ENCODE measurements at regions of chr12 and their contacts with region 1.

Region 1: GRCh38 chr12:53159195-53159839 is 21.2 kb upstream of the ZNF740 start:
- DNase-seq: peak; percentile 63
- H3K4me3 ChIP-seq: no peak overlapping the region
- H3K27ac ChIP-seq: no peak overlapping the region
- H3K4me1 ChIP-seq: no peaks in the 10 kb centered on the region
- H3K27me3 ChIP-seq: no peaks in the 10 kb centered on the region
- CTCF ChIP-seq: peak; percentile 99

Region 2: GRCh38 chr12:53190108-53190729 is 30.9 kb after region 1 on chr12:
- CTCF ChIA-PET with region 1: no interaction called
- dilution Hi-C with region 1: no loop called
- in situ Hi-C with region 1: no loop called
- intact Hi-C with region 1: loop called (anchors 1 kb)
- DNase-seq: peak; percentile 28
- H3K4me3 ChIP-seq: no peak overlapping the region
- H3K27ac ChIP-seq: no peak overlapping the region
- H3K4me1 ChIP-seq: peaks cover 5% of the 10 kb centered on the region
- H3K27me3 ChIP-seq: no peaks in the 10 kb centered on the region
- CTCF ChIP-seq: peak; percentile 89 to 93

Region 3: DNA sequence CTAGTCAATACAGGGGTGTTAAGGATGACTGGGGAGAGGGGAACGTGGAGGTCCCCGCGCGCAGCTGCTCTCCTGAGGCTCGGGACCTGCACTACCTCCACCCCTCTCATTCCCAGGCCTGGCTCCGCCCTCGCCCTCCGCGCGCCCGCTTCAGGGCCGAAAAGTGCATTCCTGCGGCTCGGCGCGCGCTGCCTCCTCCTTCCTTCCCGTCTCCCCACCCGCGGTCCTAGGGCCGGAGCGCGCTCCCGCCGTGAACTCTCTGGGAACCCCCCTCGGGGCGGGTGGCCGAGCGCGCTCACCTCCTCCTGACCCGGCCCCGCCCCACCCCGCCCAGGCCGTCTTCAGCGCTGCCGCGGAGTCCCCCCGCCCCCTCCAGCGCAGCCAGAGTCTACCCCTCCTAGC is 61.5 kb after region 1 on chr12:
- CTCF ChIA-PET with region 1: interaction called, 12 read pairs
- dilution Hi-C with region 1: no loop called
- in situ Hi-C with region 1: no loop called
- intact Hi-C with region 1: no loop called
- DNase-seq: peak; percentile 93
- H3K4me3 ChIP-seq: peak overlapping the region; percentile 48 to 60 (median 55)
- H3K27ac ChIP-seq: no peak overlapping the region
- H3K4me1 ChIP-seq: peaks cover 83% of the 10 kb centered on the region
- H3K27me3 ChIP-seq: no peaks in the 10 kb centered on the region
- CTCF ChIP-seq: no peak

Region 4: GRCh38 chr12:53267999-53268647 is 108.8 kb after region 1 on chr12 and contains the start of gene ESPL1:
- CTCF ChIA-PET with region 1: no interaction called
- dilution Hi-C with region 1: no loop called
- in situ Hi-C with region 1: no loop called
- intact Hi-C with region 1: loop called (anchors 1 kb)
- DNase-seq: peak; percentile 83
- H3K4me3 ChIP-seq: peak within 1 kb of the TSS; percentile 88 to 98 (median 96)
- H3K27ac ChIP-seq: peak within 1 kb of the TSS; percentile 91
- H3K4me1 ChIP-seq: peaks cover 18% of the 10 kb centered on the region
- H3K27me3 ChIP-seq: no peaks in the 10 kb centered on the region
- CTCF ChIP-seq: peak; percentile 13 to 15
- total RNA-seq, gene ESPL1: 0.67 to 19.7 TPM

Region 5: DNA sequence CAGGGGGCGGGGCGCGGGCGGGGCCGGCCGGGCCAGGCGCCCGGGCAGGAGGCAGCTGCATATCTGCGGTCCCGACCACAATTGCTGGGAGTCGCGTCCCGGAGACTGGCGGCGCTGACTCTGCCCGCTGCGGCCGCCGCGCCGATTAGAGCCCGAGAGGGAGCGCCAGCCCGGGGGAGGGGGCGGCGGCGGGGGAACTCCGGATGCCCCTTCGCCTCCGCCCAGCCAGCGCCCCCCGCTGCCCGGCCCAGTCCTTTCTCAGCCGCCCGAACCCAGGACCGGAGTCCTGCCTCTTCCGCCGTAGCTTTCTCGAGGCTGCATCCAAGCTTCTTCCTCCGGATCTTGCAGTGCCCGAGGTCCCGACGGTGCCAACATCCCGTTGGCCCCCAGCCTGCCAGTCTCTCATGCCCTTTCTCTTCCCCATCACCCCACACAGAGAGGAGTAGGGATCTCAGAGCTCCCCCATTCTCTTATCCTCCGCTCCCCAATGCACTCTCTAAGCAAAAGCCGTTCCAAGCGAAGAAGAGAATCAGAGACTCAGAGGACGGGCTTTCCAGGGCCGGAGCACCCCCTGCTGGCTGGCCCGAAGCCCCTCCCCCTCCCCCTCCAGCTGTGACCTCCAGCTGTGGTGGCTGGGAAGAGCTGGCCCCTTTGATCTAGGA is 185.6 kb after region 1 on chr12:
- CTCF ChIA-PET with region 1: no interaction called
- dilution Hi-C with region 1: no loop called
- in situ Hi-C with region 1: no loop called
- intact Hi-C with region 1: loop called (anchors 1 kb)
- DNase-seq: peak; percentile 58
- H3K4me3 ChIP-seq: peak overlapping the region; percentile 59 to 65 (median 62)
- H3K27ac ChIP-seq: no peak overlapping the region
- H3K4me1 ChIP-seq: peaks cover 6% of the 10 kb centered on the region
- H3K27me3 ChIP-seq: no peaks in the 10 kb centered on the region
- CTCF ChIP-seq: peak; percentile 40 to 84

Measured in mammary epithelial cell (primary cell).